CD4-positive, alpha-beta T cell (primary cell): ENCODE measurements at regions of chr2 and their contacts with region 1.

Region 1: DNA sequence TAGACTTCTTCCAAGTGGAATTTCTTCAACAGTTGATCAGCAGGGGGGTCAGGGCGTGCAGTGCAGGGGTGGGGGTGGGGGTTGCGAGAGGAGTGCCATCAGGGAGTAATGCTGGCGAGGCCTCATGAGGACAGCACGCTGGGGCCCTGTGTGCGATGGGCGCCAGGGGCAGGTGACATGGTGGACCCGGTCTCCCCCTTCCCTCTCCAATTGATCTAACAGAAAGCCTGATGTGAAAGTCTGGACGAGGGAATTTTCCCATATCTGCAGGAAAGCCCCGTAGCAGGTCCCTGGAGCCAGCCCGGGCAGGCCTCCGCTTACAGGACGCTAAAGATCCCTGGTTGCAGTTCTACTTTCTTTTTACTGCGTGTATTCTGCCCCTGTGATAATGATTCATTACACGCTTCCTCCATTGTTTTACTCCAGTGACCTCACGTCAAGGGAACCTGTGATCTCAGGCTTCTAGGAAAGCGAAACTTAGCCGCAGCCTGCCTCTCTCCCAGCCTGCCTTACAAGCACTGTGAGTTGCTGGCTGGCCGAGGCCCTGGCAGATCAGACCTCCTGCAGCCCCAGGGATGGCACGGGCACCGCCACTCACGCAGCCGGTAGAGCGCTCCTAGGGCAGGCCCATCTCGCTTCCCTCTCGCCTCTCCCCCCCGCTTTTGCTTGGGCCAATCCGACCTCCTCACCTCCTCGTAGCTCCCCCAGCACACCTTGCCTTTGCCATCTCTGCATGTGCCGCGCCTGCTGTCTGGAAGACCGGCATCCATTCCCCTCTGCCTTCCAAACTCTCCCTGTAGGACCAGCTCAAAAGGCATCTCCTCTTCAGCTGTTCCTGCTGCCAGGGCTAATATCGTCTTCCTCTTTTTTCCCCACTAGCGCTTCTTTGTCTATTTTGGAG is 19.2 kb downstream of the NEURL3 start:
- DNase-seq: peak; percentile 57 to 91 (median 77)
- ATAC-seq: peak; percentile 95
- H3K4me3 ChIP-seq: peak overlapping the region; percentile 52
- H3K4me3 Mint-ChIP-seq: peak overlapping the region; percentile 88
- H3K27ac ChIP-seq: peak overlapping the region; percentile 58
- H3K27ac Mint-ChIP-seq: peak overlapping the region; percentile 91
- H3K4me1 ChIP-seq: peaks cover 14% of the 10 kb centered on the region
- H3K4me1 Mint-ChIP-seq: peaks cover 23% of the 10 kb centered on the region
- H3K27me3 ChIP-seq: no peaks in the 10 kb centered on the region
- H3K27me3 Mint-ChIP-seq: no peaks in the 10 kb centered on the region
- CTCF ChIP-seq: no peak

Region 2: DNA sequence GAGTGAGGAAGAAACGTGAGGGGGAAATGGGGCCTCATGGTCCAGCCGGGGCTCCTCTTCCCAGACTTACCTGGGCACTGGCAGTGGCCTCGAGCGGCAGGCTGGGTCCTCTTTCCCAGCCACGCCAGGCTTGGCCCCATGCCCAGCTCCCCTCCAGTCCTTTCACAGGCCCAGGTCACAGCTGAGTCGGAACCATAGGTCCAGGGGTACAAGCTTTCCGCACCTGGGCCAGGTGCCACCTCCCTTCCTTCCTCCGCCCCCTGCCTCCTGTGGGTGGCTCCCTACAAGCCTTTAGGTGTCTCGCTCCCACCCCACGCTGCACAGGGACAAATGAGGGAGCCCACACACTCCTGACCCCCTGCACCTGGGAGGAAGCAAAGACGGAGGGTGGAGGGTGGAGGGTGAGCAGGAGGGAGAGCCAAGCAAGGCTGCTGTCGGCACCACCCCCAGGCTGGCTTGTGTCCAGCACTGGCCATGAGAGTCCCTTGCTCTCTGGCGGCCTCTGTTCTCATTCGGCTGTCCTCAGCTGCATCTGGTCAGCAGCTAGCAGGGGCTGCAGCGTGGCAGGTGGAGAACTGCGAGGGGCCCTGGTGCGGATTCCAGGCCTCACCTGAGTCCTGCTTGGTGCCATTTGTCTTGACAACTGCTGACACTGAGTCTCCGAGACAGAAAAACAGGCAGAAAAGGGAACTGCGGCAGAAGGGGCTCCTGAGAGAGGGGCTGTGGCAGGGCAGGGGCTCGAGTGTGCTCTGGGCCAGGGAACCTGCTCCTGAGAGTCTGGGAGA is 396.4 kb before region 1 on chr2:
- CTCF ChIA-PET with region 1: no interaction called
- POLR2A ChIA-PET with region 1: no interaction called
- intact Hi-C with region 1: no loop called
- DNase-seq: peak in 2 of 14 experiments; percentile 9 to 19
- ATAC-seq: no peak
- H3K4me3 ChIP-seq: no peak overlapping the region
- H3K4me3 Mint-ChIP-seq: no peak overlapping the region
- H3K27ac ChIP-seq: no peak overlapping the region
- H3K27ac Mint-ChIP-seq: no peak overlapping the region
- H3K4me1 ChIP-seq: no peaks in the 10 kb centered on the region
- H3K4me1 Mint-ChIP-seq: no peaks in the 10 kb centered on the region
- H3K27me3 ChIP-seq: no peaks in the 10 kb centered on the region
- H3K27me3 Mint-ChIP-seq: no peaks in the 10 kb centered on the region
- CTCF ChIP-seq: no peak

Region 3: DNA sequence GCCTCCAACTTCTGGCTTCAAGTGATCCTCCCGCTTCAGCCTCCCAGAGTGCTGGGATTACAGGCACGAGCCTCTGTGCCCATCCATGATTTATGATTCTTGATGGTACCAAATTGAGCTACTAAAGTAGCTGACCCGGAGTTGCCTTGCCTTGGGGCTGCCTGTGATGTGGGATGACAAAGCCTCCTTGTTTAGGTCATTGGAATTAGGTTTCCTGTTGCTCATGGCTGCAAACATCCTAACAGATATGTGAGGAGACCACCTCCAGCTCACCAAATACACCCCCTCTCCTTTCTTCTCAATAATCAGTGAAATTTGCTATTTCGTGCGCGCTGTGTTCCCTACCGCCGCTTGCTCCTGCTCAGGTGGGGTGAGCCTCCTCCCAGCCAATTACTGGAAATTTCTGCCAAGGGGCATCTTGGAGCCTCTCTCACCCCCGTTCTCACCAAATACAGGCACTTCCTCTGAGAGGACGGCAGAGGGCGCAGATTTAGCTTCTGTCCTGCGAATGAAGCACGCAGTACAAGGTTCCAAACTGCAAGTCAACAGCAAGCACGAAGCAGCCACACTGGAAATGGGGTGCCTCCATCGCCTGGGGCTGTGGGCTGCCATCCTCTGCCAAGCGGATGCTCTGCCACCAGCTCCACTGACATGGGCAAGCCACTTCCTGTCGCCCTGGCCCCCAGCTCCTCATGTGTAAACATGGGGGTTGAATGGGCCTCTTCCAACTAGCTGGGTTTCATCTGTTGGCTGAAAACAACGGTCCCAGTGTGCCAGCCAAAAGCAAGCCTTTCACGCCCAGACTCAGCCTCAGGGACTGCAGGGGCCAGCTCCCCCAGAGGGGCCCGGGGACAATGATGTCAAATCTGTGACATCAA is 78.7 kb before region 1 on chr2:
- CTCF ChIA-PET with region 1: interaction called, 4 read pairs
- POLR2A ChIA-PET with region 1: interaction called, 6 read pairs
- intact Hi-C with region 1: loop called in 1 of 2 experiments (anchors 5 kb)
- DNase-seq: peak; percentile 58 to 91 (median 76)
- ATAC-seq: peak; percentile 93
- H3K4me3 ChIP-seq: no peak overlapping the region
- H3K4me3 Mint-ChIP-seq: peak overlapping the region; percentile 79
- H3K27ac ChIP-seq: peak overlapping the region; percentile 33 to 35
- H3K27ac Mint-ChIP-seq: peak overlapping the region; percentile 84
- H3K4me1 ChIP-seq: peaks cover 38% of the 10 kb centered on the region
- H3K4me1 Mint-ChIP-seq: peaks cover 41% of the 10 kb centered on the region
- H3K27me3 ChIP-seq: no peaks in the 10 kb centered on the region
- H3K27me3 Mint-ChIP-seq: no peaks in the 10 kb centered on the region
- CTCF ChIP-seq: peak; percentile 74